Posterior vena cava (tissue), 2 donors: ENCODE measurements at regions of chr2 and their contacts with region 1.

Region 1: DNA sequence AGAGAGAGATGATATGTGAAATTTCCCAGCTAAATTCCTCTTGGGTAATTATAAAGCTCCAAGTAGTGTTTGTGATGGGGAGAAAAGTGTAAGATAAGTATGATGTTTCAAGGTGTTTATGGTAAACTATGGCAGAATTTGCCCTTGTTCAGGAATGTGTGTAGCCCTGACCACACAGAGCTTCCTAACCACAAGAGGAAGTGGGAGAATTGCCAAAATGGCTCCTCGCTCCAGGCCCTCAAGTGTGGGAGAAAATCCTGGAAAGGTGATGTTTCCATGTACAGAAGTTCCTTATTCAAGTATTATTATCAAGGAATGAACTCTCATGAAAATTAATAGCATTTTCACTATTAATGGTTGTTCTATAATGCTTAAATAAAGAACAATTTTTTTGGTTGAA is 878.3 kb downstream of the TDRD15 start:
- DNase-seq: no peak

Region 2: GRCh38 chr2:21467910-21468309 is 534.2 kb before region 1 on chr2:
- intact Hi-C with region 1: no loop called
- DNase-seq: no peak

Region 3: GRCh38 chr2:21501376-21502027 is 500.6 kb before region 1 on chr2:
- intact Hi-C with region 1: no loop called
- DNase-seq: peak; percentile 42

Region 4: DNA sequence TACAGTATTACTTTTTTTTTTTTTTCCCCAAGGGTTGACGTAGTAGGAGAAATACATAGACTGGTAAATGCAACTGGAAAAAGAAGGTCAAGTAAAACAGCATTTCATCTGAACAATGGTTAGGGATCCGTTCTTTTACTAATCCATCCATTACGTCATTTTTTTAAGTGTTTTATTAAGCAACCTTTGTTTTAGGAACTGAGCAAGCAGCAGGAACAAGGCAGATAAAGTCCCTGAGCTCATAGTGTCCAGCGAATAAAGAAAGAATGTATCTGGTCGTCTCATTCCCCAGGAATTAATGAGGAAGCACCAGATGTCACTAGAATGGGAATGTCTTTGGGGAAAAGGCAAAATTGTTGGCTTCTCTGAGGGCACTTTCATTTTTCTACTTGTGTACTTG is 35.9 kb before region 1 on chr2:
- intact Hi-C with region 1: loop called in 1 of 2 experiments (anchors 1 kb)
- DNase-seq: no peak